HEK293 (cell line): ENCODE measurements at regions of chr19 and their contacts with region 1.

Region 1: DNA sequence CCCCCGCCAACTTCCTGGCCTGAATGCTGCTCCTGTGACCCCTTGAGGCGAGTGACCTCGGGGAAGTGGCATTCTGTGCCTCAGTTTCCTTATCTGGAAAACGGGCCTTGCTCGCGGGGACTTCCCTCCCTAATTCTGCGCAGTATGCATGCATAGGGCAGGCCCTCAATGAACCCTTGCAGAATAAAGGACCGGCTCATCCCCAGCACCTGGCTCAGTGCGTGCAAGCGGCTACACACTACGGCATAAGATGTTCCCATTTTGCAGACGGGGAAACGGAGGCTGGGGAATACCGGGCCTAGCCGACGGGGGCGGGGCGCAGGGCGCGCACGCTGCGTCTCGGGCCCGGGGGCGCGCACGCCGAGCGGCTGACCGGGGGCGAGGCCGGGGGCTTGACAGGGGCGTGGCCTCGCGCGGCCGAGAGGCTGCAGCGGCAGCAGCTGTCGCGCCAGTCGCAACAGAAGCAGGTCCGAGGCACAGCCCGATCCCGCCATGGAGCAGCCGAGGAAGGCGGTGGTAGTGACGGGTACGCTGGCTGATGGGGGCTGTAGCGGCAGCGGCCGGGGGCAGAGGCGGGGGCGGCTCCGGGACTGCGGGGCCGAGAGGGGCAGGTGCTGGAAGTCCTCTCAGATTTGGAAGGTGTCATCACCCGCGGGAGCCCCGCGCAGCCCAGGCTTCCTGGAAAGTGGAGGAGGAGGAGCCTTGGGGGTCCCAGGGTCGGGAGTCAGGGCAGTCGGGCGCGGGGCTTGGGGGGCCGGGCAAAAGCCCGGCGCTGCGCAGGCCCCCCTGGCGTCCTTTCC is at the start of gene PGPEP1:
- H3K4me3 ChIP-seq: peak within 1 kb of the TSS; percentile 90
- H3K27ac ChIP-seq: no peak within 1 kb of the TSS
- H3K4me1 ChIP-seq: no peaks in the 10 kb centered on the region
- CTCF ChIP-seq: no peak

Region 2: GRCh38 chr19:18408053-18408476 is 67.7 kb after region 1 on chr19:
- CTCF ChIA-PET with region 1: interaction called, 10 read pairs
- POLR2A ChIA-PET with region 1: interaction called, 4 read pairs
- H3K4me3 ChIP-seq: no peak overlapping the region
- H3K27ac ChIP-seq: no peak overlapping the region
- H3K4me1 ChIP-seq: no peaks in the 10 kb centered on the region
- CTCF ChIP-seq: peak; percentile 52; the same call in 1 of the 2 replicates